Thyroid gland (tissue), 4 donors: ENCODE measurements at regions of chr2 and their contacts with region 1.

Region 1: GRCh38 chr2:85539361-85540132 is 579 bp downstream of the MAT2A start:
- DNase-seq: peak; percentile 60 to 63
- H3K4me3 ChIP-seq: peak overlapping the region; percentile 52 to 94 (median 89)
- H3K27ac ChIP-seq: peak overlapping the region; percentile 97 to 100 (median 98)
- H3K4me1 ChIP-seq: peaks cover 31 to 38% of the 10 kb centered on the region in 2 donors
- H3K27me3 ChIP-seq: no peaks in the 10 kb centered on the region
- CTCF ChIP-seq: no peak
- POLR2A ChIP-seq: no peak

Region 2: DNA sequence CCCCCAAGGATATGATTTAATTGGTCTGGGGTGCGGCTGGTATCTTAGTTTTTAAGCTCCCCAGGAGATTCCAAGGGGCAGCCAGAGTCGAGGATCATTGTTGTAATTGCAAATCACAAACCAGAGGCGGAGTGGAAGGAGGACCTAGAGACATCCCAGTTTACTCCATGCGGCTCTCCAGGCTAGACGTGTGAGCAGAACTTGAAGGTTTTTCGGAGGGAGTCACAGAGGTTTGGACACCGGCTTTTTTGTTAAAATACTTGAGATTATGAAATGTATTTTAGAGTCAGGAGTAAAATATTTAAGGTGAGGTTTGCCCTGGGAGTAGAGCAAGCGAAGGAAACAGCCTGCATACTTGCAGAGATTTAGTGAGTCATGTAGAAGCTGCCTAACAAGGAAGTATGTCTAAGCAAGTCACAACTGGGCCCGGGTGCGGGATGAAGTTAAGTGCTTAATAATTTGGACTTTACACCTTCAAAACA is 251.3 kb before region 1 on chr2:
- intact Hi-C with region 1: no loop called
- DNase-seq: no peak
- H3K4me3 ChIP-seq: no peak overlapping the region
- H3K27ac ChIP-seq: no peak overlapping the region
- H3K4me1 ChIP-seq: peaks cover 6 to 12% of the 10 kb centered on the region in 2 donors
- H3K27me3 ChIP-seq: no peaks in the 10 kb centered on the region
- CTCF ChIP-seq: no peak
- POLR2A ChIP-seq: no peak

Region 3: DNA sequence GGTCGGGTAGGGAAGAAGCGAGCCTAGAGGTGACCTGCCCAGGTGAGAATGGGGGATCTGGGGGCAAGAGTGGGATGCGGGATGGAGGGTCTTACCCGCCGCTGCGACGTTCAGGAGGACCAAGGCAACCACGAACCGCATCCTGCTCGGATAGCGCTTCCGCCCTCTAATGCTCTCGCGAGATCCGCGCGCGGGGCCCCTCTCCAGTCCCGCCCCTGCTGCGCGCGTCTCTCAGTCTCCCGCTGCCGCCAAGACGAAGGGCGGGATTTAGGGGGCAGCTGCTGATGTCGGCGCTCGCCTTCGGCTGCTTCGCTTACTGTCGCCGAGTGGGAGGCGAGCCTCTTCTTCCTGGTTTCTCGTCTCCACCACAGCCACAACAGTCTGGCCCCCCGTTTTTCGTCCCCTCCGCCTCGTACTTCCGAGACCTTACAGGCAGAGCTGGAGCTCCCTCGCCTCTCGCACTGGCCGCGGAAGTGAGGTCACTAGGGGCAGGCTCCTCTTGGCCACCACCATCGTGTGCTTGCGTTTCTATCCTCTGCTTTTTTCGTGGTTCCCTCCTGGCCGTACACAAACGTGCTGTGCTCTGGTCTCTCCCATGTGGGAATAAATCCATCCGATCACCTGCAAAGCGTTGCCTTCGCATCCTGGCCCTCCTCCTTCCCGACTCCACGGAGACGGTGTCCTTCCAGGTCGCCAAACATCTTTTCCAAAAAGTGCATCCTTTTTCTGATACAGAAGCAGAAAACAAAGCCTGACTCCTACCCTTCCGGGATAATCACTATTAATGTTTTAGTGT is 211.5 kb before region 1 on chr2 and contains the start of gene TGOLN2:
- intact Hi-C with region 1: loop called (anchors 10 kb)
- DNase-seq: peak; percentile 91 to 92
- H3K4me3 ChIP-seq: peak within 1 kb of the TSS; percentile 56 to 86 (median 65)
- H3K27ac ChIP-seq: peak within 1 kb of the TSS; percentile 80 to 96 (median 91)
- H3K4me1 ChIP-seq: peaks cover 37 to 44% of the 10 kb centered on the region in 2 donors
- H3K27me3 ChIP-seq: no peaks in the 10 kb centered on the region
- CTCF ChIP-seq: peak in 2 of 6 experiments; percentile 13 to 22
- POLR2A ChIP-seq: peak; percentile 84 to 96
- total RNA-seq, gene TGOLN2: 146 to 207 (median 162) TPM

Region 4: GRCh38 chr2:85843543-85843942 is 304.0 kb after region 1 on chr2:
- intact Hi-C with region 1: no loop called
- DNase-seq: no peak
- H3K4me3 ChIP-seq: no peak overlapping the region
- H3K27ac ChIP-seq: no peak overlapping the region
- H3K4me1 ChIP-seq: no peaks in the 10 kb centered on the region
- H3K27me3 ChIP-seq: no peaks in the 10 kb centered on the region
- CTCF ChIP-seq: peak in 3 of 6 experiments; percentile 14 to 40 (median 31)
- POLR2A ChIP-seq: no peak